ENCODE measurements at regions of chr13 and their contacts with region 1.

Region 1: DNA sequence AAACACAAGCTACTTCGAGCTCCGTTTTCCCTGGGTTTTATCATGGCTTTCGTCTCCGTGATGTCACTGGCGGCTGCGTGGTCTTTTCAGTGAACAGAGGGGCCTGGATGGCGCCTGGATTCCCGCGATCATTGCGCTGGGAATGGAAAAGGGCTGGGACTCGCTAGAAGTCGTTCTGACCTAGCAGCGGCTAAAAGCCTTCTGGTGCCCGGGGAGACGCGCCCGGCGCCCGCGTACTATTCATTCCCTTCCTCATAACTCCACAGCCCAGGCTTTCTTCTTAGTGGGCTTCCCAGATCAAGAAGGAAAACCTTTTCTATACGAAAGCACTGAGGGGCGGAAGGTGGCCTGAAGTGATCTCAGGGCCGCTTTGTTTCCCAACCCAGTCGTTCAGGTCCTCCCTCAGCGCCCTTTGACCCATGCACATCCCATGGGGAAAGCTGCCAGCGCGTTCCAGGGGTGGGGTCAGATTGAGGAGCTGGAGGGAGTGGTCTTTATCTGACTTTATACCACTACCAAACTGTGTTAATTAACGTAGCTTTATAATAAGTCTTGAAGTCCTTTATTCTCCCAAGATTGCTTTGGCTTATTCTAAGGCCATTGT is 96.6 kb downstream of the ELF1 start:
- DNase-seq: peak in 2 of 10 donors; percentile 11 to 13
- ATAC-seq: no peak
- H3K4me3 Mint-ChIP-seq: peak overlapping the region; percentile 43 to 97 (median 73)
- H3K27ac Mint-ChIP-seq: peak overlapping the region; percentile 27 to 98 (median 78)
- H3K4me1 Mint-ChIP-seq: peaks cover 11 to 27% (median 24%) of the 10 kb centered on the region in 4 donors
- H3K27me3 Mint-ChIP-seq: no peaks in the 10 kb centered on the region

Region 2: GRCh38 chr13:40770934-40771618 is 151.5 kb before region 1 on chr13 and contains the start of gene MRPS31:
- POLR2A ChIA-PET with region 1: interaction called, 10 read pairs
- DNase-seq: peak; percentile 87 to 96 (median 93)
- ATAC-seq: peak; percentile 94 to 98
- H3K4me3 Mint-ChIP-seq: peak within 1 kb of the TSS; percentile 96 to 100 (median 98)
- H3K27ac Mint-ChIP-seq: peak within 1 kb of the TSS; percentile 92 to 99 (median 98)
- H3K4me1 Mint-ChIP-seq: peaks cover 10 to 47% (median 28%) of the 10 kb centered on the region in 4 donors
- H3K27me3 Mint-ChIP-seq: no peaks in the 10 kb centered on the region
- polyA plus RNA-seq, gene MRPS31: 48.8 to 60.2 (median 57.8) TPM

Region 3: DNA sequence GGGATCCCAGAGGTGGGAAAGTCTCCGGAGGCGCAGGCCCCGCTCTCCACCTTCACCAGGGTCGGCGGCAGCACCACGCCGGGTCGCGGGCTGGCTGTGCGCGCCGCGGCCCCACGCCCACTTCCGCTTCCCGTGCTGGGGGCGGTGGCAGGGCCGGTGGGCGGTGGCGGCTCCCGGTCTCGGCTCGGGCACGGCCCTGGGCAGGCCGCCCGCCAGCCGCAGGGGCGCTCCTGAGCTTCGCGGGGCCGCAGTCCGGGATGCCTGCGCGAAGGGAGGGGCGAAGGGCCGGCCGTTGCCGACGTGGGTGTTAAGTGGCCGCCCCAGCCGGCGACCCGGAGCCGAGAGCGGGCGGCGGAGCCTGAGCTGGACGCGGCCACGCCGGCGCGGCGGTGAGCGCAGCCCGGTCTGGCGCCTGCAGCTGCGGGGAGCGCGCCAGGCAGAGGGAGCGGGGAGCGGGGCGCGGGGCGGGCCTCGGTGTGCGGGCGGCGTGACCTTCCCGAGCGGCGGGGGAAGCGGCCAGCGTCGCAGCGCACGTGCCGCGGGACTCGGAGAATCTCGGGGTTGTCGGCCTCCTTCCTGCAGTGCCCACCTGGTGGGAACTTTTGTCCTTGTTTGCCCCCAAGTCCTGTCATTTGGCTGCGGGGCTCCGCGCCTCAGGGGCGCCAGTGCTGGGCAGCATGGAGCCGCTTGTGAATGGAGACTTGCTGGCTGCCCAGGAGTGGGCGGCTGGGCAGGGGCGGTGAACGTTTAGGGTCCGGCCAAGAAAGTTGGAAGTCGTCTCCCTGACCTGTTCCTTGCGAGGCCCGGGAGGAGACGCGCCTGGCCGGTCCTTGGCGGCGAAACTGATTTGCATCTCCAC is 133.0 kb before region 1 on chr13 and contains the start of gene SLC25A15:
- POLR2A ChIA-PET with region 1: interaction called, 13 read pairs
- DNase-seq: peak; percentile 47 to 82 (median 72)
- ATAC-seq: peak; percentile 86 to 92
- H3K4me3 Mint-ChIP-seq: peak within 1 kb of the TSS; percentile 55 to 90 (median 85)
- H3K27ac Mint-ChIP-seq: peak within 1 kb of the TSS; percentile 40 to 95 (median 88)
- H3K4me1 Mint-ChIP-seq: peaks cover 6 to 51% (median 36%) of the 10 kb centered on the region in 4 donors
- H3K27me3 Mint-ChIP-seq: no peaks in the 10 kb centered on the region
- polyA plus RNA-seq, gene SLC25A15: 5.3 to 12.1 (median 10.2) TPM

Region 4: DNA sequence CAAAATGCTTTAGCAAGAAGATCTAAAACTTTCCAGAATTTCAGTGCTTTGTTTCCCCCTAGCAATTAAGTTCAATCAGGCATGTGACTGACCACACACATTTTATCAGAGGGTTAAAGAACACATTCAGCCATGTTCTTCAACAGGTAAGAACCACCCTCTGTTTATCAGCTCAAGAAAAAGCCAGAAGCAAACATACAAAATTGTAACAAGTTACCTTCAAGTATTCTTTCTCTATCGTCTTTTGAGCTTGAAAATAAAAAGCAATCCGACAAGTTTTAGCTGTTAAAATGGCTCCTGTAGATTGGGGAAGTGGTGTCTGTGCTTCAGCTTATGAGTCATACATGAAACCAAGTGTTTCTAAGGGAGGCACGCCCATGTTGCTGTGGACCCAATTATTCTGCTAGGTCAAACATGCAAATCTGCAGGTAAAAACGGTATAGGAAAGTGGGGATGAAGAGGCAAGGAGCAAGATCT is 96.5 kb after region 1 on chr13 and contains the start of gene ELF1:
- POLR2A ChIA-PET with region 1: interaction called, 20 read pairs
- DNase-seq: peak in 9 of 10 donors; percentile 47 to 83 (median 64)
- ATAC-seq: peak; percentile 89 to 91
- H3K4me3 Mint-ChIP-seq: peak within 1 kb of the TSS; percentile 80 to 96 (median 92)
- H3K27ac Mint-ChIP-seq: peak within 1 kb of the TSS; percentile 95 to 98 (median 97)
- H3K4me1 Mint-ChIP-seq: peaks cover 20 to 54% (median 47%) of the 10 kb centered on the region in 4 donors
- H3K27me3 Mint-ChIP-seq: no peaks in the 10 kb centered on the region
- polyA plus RNA-seq, gene ELF1: 127 to 155 (median 130) TPM

Region 5: DNA sequence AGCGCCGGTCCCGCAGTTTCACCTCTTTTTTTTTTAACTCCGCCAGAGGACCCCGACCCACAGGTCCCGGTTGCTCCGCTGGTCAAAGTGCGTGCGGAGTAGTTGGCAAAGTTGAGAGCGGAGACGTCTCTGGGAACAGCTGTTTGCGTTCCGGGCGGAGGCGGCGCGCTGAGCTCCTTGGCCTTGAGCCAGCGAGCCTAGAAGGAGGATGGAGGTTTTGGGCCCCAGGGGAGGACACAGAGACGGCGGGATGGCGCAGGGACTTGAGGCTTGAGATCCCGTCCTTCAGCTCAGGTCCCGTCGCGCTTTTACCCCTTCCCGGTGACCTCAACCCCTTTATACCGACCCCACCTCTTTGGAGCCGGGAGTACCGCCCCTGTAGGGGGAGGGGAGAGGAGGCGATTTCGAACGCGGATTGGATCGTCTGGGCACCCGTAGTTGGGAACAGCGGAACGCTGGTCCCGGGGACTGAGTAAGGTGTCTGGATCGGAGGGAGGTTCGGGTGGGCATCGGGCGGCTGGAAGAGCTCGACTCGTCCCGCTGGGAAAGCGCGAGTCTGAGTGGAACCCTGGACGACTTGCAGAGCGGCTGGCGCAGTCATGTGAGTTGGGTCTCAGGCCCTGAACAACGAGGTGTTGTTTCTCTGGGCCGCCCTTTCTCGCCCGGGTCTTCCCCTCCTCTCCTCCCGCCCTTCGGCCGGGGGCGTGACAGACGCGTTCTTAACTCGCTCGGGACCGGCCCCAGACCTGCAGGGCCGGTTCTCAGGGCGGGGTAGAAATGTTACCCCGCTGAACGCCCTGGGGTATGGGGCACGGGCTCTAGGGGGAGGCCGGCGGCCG is 138.8 kb after region 1 on chr13 and contains the start of gene WBP4:
- POLR2A ChIA-PET with region 1: interaction called, 26 read pairs
- DNase-seq: peak; percentile 73 to 99 (median 86)
- ATAC-seq: peak; percentile 58 to 62
- H3K4me3 Mint-ChIP-seq: peak within 1 kb of the TSS; percentile 95 to 100 (median 100)
- H3K27ac Mint-ChIP-seq: peak within 1 kb of the TSS; percentile 98 to 100 (median 99)
- H3K4me1 Mint-ChIP-seq: peaks cover 20 to 66% (median 57%) of the 10 kb centered on the region in 4 donors
- H3K27me3 Mint-ChIP-seq: peaks cover 0 to 13% (median 0%) of the 10 kb centered on the region in 5 donors
- polyA plus RNA-seq, gene WBP4: 3.7 to 4.9 (median 3.9) TPM